ENCODE measurements at regions of chr11 and their contacts with region 1.

Region 1: GRCh38 chr11:83156150-83156995 is 558 bp upstream of the PCF11 start:
- DNase-seq: peak; percentile 100
- H3K4me3 ChIP-seq: peak overlapping the region; percentile 79
- H3K27ac ChIP-seq: peak overlapping the region; percentile 65
- H3K27me3 ChIP-seq: no peaks in the 10 kb centered on the region
- CTCF ChIP-seq: no peak

Region 2: DNA sequence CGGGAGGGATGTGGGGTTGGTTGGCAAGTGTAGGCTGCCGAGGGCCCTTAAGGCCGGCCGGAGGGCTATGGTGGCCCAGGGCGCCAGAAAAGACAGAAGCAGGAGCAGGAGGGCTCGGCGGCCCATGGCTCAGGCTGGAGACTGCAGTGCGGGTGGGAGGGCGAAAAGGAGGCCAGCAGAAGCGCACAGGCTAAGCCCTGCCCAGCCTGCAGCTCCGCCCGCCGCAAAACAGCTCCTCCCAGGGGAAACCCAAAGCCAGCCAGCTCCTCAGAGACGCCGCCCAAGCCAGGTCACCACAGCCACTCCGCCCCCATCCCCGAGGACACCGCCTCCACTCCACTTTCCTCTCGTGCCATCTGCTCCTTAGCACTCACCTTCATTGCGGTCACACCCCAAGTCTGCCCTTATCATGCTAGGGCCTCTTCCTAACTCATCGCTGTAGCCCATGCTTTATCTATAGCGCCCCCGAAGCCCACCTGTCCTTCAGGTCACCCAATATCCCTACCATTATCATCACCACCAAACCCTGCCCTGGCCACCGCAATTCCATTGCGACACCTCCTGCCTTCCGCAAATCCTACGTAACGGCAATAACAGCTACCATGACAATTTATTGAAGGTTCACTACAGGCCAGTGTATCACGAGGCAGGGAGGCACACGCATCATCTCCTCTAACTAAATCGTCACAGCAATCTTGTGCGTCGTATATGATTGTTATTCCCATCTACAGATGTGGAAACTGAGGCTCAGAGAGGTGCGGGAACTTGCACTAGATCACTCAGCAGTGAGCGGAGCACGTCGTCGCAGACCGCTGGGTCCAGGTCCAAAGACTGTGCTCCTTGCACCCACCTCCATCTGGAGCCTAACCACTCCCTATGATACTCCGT is 255.9 kb before region 1 on chr11 and contains the start of gene PRCP:
- CTCF ChIA-PET with region 1: interaction called, 4 read pairs
- POLR2A ChIA-PET with region 1: interaction called, 22 read pairs
- DNase-seq: peak; percentile 61
- H3K4me3 ChIP-seq: peak within 1 kb of the TSS; percentile 87
- H3K27ac ChIP-seq: peak within 1 kb of the TSS; percentile 74
- H3K27me3 ChIP-seq: no peaks in the 10 kb centered on the region
- CTCF ChIP-seq: 0 out of 2 replicates have a peak, but pooled peaks have one; percentile 1
- polyA plus RNA-seq, gene PRCP: 128 and 157 TPM in 2 replicates

Region 3: GRCh38 chr11:83071567-83072349 is 84.6 kb before region 1 on chr11 and contains the start of gene RAB30:
- CTCF ChIA-PET with region 1: no interaction called
- POLR2A ChIA-PET with region 1: interaction called, 36 read pairs
- DNase-seq: peak; percentile 99
- H3K4me3 ChIP-seq: peak within 1 kb of the TSS; percentile 93
- H3K27ac ChIP-seq: peak within 1 kb of the TSS; percentile 89
- H3K27me3 ChIP-seq: no peaks in the 10 kb centered on the region
- CTCF ChIP-seq: no peak
- polyA plus RNA-seq, gene RAB30: 9.3 and 11.8 TPM in 2 replicates

Region 4: GRCh38 chr11:83112886-83113285 is 43.5 kb before region 1 on chr11:
- CTCF ChIA-PET with region 1: no interaction called
- POLR2A ChIA-PET with region 1: no interaction called
- DNase-seq: no peak
- H3K4me3 ChIP-seq: no peak overlapping the region
- H3K27ac ChIP-seq: no peak overlapping the region
- H3K27me3 ChIP-seq: no peaks in the 10 kb centered on the region
- CTCF ChIP-seq: no peak

Measured in AG04450 (cell line).